Activated T-helper 1 cell treated with anti-CD3 and anti-CD28 coated beads, Interleukin-12 subunit alpha, Interleukin-12 subunit beta, Interleukin-2, Interleukin-4 antibody, amounts not matched to agents 30 ng/mL and 10 ng/mL and 1 ng/mL, durations not matched to agents 14 hours and 24 hours and 36 hours (primary cell): ENCODE measurements at regions of chr9 and their contacts with region 1.

Region 1: DNA sequence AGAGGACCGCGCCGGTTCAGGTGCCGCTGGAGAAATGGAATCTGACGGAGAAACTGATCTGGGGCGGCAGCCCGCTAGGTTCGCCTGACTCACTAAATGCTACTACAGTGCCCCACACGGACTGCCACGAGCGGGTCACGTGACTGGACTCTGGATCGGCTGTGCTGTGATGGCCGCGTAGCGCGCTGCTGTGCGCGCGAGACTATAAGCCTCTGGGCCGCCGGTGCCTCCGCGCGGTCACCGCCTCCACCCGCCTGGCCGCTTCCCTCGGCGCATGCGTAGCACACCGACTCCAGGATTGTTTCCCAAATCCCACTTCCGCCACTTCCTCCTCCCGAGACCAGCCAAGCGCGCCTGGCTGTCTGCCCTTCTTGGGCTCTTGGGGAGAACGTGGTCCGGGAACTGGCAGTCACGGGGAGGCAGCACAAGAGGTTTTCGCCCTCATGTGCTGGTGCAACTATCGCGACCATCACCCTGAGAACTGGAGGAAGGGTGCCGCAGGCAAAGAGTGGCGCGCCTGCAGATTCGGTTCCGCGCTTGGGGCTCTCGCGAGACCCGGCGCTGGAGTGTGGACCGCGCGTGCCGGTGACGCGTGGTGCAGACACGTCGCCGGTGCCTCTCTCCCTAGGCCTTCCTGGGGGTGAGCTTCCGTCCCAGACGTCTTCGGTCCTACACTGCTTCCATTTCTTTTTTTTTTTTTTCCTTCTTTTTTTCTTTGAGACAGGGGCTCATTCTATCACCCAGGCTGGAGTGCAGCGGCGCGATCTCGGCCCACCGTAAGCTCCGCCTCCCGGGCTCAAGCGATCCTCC is 35.8 kb upstream of the GLDC start:
- DNase-seq: peak; percentile 88
- H3K4me3 Mint-ChIP-seq: peak overlapping the region; percentile 94
- H3K27ac Mint-ChIP-seq: peak overlapping the region; percentile 99
- H3K4me1 Mint-ChIP-seq: peaks cover 24% of the 10 kb centered on the region
- H3K27me3 Mint-ChIP-seq: peaks cover 3% of the 10 kb centered on the region

Region 2: DNA sequence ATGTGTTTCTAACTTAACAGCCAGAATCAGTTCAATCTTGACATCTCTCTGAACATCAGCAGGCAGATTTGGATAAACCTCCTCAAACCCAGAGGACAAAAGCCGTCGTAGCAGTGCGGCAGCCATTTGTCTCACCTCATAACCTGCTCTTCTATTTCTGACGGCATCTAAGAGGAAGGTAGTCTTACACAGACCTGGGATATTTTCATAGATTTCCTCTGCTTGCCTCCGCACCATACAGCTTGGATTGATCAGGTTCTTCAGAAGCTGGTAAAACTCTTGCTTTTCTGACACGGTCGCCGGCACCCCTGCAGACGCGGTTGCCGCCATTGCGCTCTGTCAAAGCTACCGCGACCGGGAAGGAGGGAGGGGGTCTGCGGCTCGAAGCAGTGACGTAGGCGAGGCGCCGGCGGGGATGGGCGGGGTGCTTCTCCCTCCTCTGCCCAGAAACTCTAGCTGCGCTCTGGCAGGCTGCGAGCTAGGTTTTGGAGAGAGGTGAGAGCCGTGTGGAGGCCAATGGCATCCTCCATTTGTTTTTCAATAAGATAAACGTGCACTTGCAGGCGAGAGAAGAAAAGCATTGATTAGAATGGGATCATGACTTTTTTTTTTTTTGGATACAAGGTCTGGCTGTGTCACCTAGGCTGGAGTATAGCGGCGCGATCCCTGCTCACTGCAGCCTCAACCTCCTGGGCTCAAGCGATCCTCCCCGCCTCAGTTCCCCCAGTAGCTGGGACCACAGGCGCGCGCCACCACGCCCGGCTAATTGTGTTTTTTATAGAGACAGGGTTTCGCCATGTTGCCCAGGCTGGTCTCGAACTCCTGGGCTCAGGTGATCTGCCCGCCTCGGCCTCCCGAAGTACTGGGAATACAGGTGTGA is 665.8 kb before region 1 on chr9 and contains the start of gene RANBP6:
- intact Hi-C with region 1: loop called (anchors 1 kb)
- DNase-seq: peak; percentile 86
- H3K4me3 Mint-ChIP-seq: peak within 1 kb of the TSS; percentile 96
- H3K27ac Mint-ChIP-seq: peak within 1 kb of the TSS; percentile 97
- H3K4me1 Mint-ChIP-seq: peaks cover 49% of the 10 kb centered on the region
- H3K27me3 Mint-ChIP-seq: no peaks in the 10 kb centered on the region
- total RNA-seq, gene RANBP6: 19.2 and 22.7 TPM in 2 replicates

Region 3: GRCh38 chr9:6353851-6354686 is 327.3 kb before region 1 on chr9:
- intact Hi-C with region 1: loop called (anchors 1 kb)
- DNase-seq: peak; percentile 24
- H3K4me3 Mint-ChIP-seq: no peak overlapping the region
- H3K27ac Mint-ChIP-seq: no peak overlapping the region
- H3K4me1 Mint-ChIP-seq: peaks cover 20% of the 10 kb centered on the region
- H3K27me3 Mint-ChIP-seq: peaks cover 20% of the 10 kb centered on the region

Region 4: GRCh38 chr9:6498982-6499381 is 182.4 kb before region 1 on chr9:
- intact Hi-C with region 1: no loop called
- DNase-seq: no peak
- H3K4me3 Mint-ChIP-seq: no peak overlapping the region
- H3K27ac Mint-ChIP-seq: peak overlapping the region; percentile 40
- H3K4me1 Mint-ChIP-seq: peaks cover 10% of the 10 kb centered on the region
- H3K27me3 Mint-ChIP-seq: peaks cover 1% of the 10 kb centered on the region

Region 5: DNA sequence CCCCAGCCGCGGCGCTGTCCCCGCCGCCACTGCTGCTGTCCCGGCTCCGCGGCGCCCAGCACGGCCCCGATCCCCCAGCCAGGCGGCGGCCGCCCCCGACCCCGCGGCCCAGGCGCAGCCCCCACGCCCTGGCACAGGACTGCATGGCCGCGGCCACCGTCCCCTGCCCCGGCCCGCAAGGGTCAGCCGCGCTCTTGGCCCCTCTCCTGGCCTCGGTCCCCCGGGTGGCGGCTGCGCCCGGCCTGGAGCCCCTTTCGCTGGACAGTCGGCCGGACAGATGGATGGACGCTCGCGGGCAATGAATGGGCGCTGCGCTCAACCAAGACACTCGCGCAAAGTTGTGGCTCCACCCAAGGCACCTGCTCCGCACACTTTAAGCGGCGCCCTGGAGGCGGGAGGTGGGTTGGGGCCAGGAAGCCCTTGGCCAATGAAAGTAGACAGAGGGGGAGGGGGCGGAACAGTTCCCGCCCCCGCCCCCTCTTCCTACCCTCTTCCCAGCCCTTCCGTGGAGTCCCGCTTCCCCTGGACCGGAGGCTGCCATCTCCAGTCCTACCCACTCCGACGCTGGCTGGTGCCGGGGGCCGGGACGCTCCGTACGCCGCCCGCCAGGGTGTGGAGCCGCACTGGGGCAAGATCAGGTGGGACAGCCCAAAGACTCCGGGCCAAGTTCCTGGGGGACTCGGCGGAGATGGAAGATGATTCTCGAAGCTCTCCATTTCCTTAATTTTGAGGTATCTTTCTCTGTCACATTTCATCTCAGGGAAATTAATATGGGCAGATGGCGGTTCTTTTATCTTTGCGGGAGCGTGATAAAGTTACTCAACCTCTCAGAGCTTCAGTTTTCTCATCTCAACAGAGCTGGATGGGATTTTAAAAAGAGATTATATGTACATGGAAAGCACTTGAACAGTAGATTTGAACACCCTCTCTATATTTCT is 35.7 kb before region 1 on chr9 and contains the start of gene GLDC:
- intact Hi-C with region 1: loop called (anchors 1 kb)
- DNase-seq: peak; percentile 20
- H3K4me3 Mint-ChIP-seq: peak within 1 kb of the TSS; percentile 77
- H3K27ac Mint-ChIP-seq: peak within 1 kb of the TSS; percentile 59
- H3K4me1 Mint-ChIP-seq: peaks cover 19% of the 10 kb centered on the region
- H3K27me3 Mint-ChIP-seq: peaks cover 63% of the 10 kb centered on the region
- total RNA-seq, gene GLDC: 1.4 and 1.8 TPM in 2 replicates

Region 6: GRCh38 chr9:6715755-6716643 is 34.6 kb after region 1 on chr9:
- intact Hi-C with region 1: loop called (anchors 1 kb)
- DNase-seq: peak; percentile 61
- H3K4me3 Mint-ChIP-seq: peak overlapping the region; percentile 84
- H3K27ac Mint-ChIP-seq: peak overlapping the region; percentile 83
- H3K4me1 Mint-ChIP-seq: peaks cover 7% of the 10 kb centered on the region
- H3K27me3 Mint-ChIP-seq: peaks cover 4% of the 10 kb centered on the region